Natural killer cell (primary cell): ENCODE measurements at regions of chr3 and their contacts with region 1.

Region 1: GRCh38 chr3:37974121-37975083 is 16.2 kb upstream of the VILL start:
- DNase-seq: peak; percentile 57 to 86
- ATAC-seq: peak; percentile 89 to 99 (median 99)
- H3K4me3 ChIP-seq: no peak overlapping the region
- H3K4me3 Mint-ChIP-seq: no peak overlapping the region
- H3K27ac ChIP-seq: no peak overlapping the region
- H3K27ac Mint-ChIP-seq: no peak overlapping the region
- H3K4me1 ChIP-seq: peaks cover 5% of the 10 kb centered on the region
- H3K4me1 Mint-ChIP-seq: peaks cover 0 to 6% of the 10 kb centered on the region in 2 donors
- H3K27me3 ChIP-seq: no peaks in the 10 kb centered on the region
- H3K27me3 Mint-ChIP-seq: no peaks in the 10 kb centered on the region
- CTCF ChIP-seq: peak; percentile 85

Region 2: DNA sequence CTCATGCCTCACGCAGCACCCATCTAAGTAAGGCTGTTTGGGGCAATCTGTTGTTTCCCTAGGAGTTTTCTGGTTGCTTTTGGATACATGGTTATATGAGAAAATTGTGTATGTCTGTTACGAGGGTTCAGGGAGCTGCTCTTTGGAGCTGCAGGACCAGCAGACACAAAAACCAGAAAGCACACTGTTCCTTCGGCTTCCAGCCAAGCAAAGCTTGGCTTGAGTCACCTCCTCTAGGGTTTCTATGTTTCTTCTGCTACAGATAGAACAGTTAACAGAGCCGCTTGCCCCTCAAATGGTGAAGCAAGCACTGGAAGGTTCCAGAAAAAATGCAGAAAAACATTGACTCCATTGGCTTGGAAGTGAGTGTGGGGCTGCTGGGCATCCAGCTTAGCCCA is 161.9 kb before region 1 on chr3:
- intact Hi-C with region 1: no loop called
- DNase-seq: no peak
- ATAC-seq: no peak
- H3K4me3 ChIP-seq: no peak overlapping the region
- H3K4me3 Mint-ChIP-seq: no peak overlapping the region
- H3K27ac ChIP-seq: no peak overlapping the region
- H3K27ac Mint-ChIP-seq: no peak overlapping the region
- H3K4me1 ChIP-seq: no peaks in the 10 kb centered on the region
- H3K4me1 Mint-ChIP-seq: no peaks in the 10 kb centered on the region
- H3K27me3 ChIP-seq: no peaks in the 10 kb centered on the region
- H3K27me3 Mint-ChIP-seq: peaks cover 0 to 7% of the 10 kb centered on the region in 2 donors
- CTCF ChIP-seq: no peak

Region 3: GRCh38 chr3:37945807-37946530 is 28.4 kb before region 1 on chr3:
- intact Hi-C with region 1: no loop called
- DNase-seq: no peak
- ATAC-seq: no peak
- H3K4me3 ChIP-seq: no peak overlapping the region
- H3K4me3 Mint-ChIP-seq: no peak overlapping the region
- H3K27ac ChIP-seq: no peak overlapping the region
- H3K27ac Mint-ChIP-seq: no peak overlapping the region
- H3K4me1 ChIP-seq: no peaks in the 10 kb centered on the region
- H3K4me1 Mint-ChIP-seq: no peaks in the 10 kb centered on the region
- H3K27me3 ChIP-seq: no peaks in the 10 kb centered on the region
- H3K27me3 Mint-ChIP-seq: no peaks in the 10 kb centered on the region
- CTCF ChIP-seq: no peak

Region 4: DNA sequence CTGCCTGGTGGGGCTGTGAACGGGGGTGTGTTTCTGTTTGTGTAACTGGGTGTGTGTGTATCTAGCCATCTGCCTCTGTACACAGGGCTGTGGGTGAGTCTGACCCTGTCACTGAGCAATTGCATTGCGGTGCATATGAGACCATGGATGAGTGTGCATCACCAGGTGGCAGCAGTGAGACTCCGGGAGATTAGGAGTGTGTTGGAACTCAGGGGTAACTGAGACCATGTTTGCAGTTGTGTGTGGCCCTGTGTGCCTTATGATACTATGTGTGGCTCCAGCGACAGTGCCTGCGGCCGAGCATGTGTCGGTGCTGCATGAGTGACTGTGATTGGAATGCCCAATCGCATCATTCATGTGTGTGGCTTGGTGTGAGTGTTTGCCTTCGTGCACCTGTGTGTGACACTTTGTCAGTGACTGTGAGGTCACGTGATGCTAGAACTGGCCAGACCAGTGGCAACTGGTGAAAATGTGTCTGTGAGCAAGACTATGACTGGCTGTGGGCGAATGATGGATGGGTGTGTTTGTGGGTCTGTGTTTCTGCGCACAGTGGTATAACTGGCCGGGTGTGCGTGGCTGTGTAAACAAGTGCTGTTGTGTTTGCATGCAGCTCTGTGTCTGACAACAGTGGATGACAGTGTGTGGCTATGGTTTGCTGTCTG is 30.1 kb after region 1 on chr3:
- intact Hi-C with region 1: loop called (anchors 1 kb)
- DNase-seq: peak in 1 of 2 donors; percentile 69
- ATAC-seq: peak; percentile 59 to 76 (median 66)
- H3K4me3 ChIP-seq: no peak overlapping the region
- H3K4me3 Mint-ChIP-seq: no peak overlapping the region
- H3K27ac ChIP-seq: no peak overlapping the region
- H3K27ac Mint-ChIP-seq: peak overlapping the region in 1 of 2 donors; percentile 79
- H3K4me1 ChIP-seq: no peaks in the 10 kb centered on the region
- H3K4me1 Mint-ChIP-seq: peaks cover 7 to 31% of the 10 kb centered on the region in 2 donors
- H3K27me3 ChIP-seq: no peaks in the 10 kb centered on the region
- H3K27me3 Mint-ChIP-seq: no peaks in the 10 kb centered on the region
- CTCF ChIP-seq: peak; percentile 35